WTC11 (cell line): ENCODE measurements at regions of chr6 and their contacts with region 1.

Region 1: GRCh38 chr6:136503303-136504029 is 46.8 kb downstream of the MAP7 start:
- DNase-seq: peak; percentile 26
- ATAC-seq: peak; percentile 86
- H3K4me3 Mint-ChIP-seq: peak overlapping the region; percentile 8
- H3K27ac Mint-ChIP-seq: peak overlapping the region; percentile 97
- H3K4me1 Mint-ChIP-seq: peaks cover 86% of the 10 kb centered on the region
- H3K27me3 Mint-ChIP-seq: no peaks in the 10 kb centered on the region
- CTCF ChIP-seq: no peak

Region 2: DNA sequence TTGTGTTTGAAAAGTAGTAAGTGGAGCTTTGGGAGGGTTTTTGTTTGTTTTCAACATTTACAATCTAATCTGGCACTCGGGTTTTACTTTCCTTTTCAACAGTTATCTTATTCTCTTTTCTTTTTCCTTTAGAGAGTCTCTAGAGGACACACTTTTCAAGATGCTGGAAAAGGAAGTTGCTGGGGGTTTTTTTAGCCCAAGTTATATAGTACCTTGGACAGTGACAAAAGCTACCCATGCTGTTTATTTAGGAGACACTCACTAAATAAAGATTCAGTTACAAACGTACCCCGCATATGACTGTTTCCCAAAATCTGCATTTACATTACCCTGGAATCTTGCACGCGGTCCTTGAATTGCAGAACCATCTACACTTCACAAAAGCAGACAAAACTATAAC is 32.1 kb before region 1 on chr6:
- CTCF ChIA-PET with region 1: no interaction called
- POLR2A ChIA-PET with region 1: no interaction called
- DNase-seq: no peak
- ATAC-seq: peak; percentile 16; the same call in 1 of the 2 replicates
- H3K4me3 Mint-ChIP-seq: no peak overlapping the region
- H3K27ac Mint-ChIP-seq: peak overlapping the region; percentile 4; the same call in 1 of the 2 replicates
- H3K4me1 Mint-ChIP-seq: peaks cover 56% of the 10 kb centered on the region
- H3K27me3 Mint-ChIP-seq: no peaks in the 10 kb centered on the region
- CTCF ChIP-seq: no peak

Region 3: DNA sequence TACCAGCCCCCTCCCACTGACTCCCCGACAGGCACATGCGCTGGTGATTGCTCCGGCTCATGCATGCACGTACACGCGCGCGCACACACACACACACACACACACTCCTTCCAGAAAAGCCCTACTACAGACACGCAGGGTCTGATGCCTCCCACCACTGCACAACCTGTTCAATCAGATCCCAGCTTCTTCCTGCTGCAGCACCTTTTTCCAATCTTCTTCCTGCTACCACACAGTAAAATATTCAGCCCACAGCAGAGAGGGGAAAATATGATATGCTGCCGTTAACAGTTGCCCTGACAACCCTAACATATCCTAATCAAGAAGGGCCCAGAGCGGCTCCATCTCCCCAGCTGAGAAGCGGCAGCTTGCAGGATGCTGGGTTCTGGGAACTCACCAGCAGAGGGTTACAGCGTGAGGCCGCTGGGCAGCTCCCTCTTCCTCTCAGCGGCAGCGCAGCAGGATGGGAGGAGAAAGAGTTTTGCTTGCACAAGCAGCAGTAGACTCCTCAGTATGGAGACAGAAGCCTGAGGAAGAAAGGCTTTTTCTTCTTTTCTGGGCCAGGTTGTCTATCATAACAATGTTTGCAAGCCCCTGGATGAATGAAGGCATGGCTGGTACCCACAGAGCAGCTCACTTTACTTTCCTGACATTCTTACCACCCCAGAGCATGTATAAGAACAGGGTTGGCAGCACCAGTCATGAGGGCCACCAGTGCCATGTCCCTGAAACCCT is 22.9 kb after region 1 on chr6:
- CTCF ChIA-PET with region 1: interaction called, 11 read pairs
- POLR2A ChIA-PET with region 1: no interaction called
- DNase-seq: peak; percentile 72
- ATAC-seq: peak; percentile 92
- H3K4me3 Mint-ChIP-seq: peak overlapping the region; percentile 38
- H3K27ac Mint-ChIP-seq: peak overlapping the region; percentile 42; the same call in 1 of the 2 replicates
- H3K4me1 Mint-ChIP-seq: peaks cover 60% of the 10 kb centered on the region
- H3K27me3 Mint-ChIP-seq: no peaks in the 10 kb centered on the region
- CTCF ChIP-seq: no peak

Region 4: GRCh38 chr6:136640134-136640915 is 136.9 kb after region 1 on chr6:
- CTCF ChIA-PET with region 1: no interaction called
- POLR2A ChIA-PET with region 1: no interaction called
- DNase-seq: no peak
- ATAC-seq: no peak
- H3K4me3 Mint-ChIP-seq: no peak overlapping the region
- H3K27ac Mint-ChIP-seq: 0 out of 2 replicates have a peak overlapping the region, but pooled peaks have one; percentile 5
- H3K4me1 Mint-ChIP-seq: peaks cover 18% of the 10 kb centered on the region
- H3K27me3 Mint-ChIP-seq: no peaks in the 10 kb centered on the region
- CTCF ChIP-seq: no peak